Common myeloid progenitor, CD34-positive (primary cell): ENCODE measurements at regions of chr2 and their contacts with region 1.

Region 1: GRCh38 chr2:237512774-237513466 is 25.9 kb downstream of the MLPH start:
- DNase-seq: peak; percentile 89 to 94 (median 90)
- H3K4me3 ChIP-seq: no peak overlapping the region
- H3K27ac ChIP-seq: no peak overlapping the region
- H3K4me1 ChIP-seq: no peaks in the 10 kb centered on the region
- H3K27me3 ChIP-seq: peaks cover 0 to 2% (median 0%) of the 10 kb centered on the region in 5 experiments

Region 2: GRCh38 chr2:237500681-237501424 is 12.1 kb before region 1 on chr2:
- CTCF ChIA-PET with region 1: interaction called, 22 read pairs
- POLR2A ChIA-PET with region 1: interaction called, 3 read pairs
- DNase-seq: peak; percentile 24 to 74 (median 58)
- H3K4me3 ChIP-seq: no peak overlapping the region
- H3K27ac ChIP-seq: no peak overlapping the region
- H3K4me1 ChIP-seq: peaks cover 0 to 4% (median 2%) of the 10 kb centered on the region in 4 experiments
- H3K27me3 ChIP-seq: peaks cover 0 to 23% (median 10%) of the 10 kb centered on the region in 5 experiments

Region 3: DNA sequence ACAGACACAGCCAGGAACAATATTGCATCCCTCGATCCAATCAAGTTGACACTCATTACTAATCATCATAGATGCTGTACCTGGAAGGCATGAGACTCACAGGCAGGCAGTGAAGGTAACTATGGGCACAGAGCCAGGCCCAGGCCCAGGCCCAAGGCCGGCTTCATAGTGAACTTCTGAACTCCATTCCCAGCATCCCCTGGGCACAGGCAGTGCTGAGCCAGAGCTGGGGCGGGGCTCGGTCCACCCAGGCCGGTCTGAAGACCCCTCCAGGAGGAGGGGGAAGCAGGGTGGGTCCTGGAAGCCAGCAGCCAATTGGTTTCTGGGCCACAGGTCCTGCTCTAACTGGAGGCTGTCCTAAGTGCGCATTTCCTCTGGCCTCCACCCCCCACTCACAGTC is 11.7 kb after region 1 on chr2:
- CTCF ChIA-PET with region 1: interaction called, 11 read pairs
- POLR2A ChIA-PET with region 1: no interaction called
- DNase-seq: no peak
- H3K4me3 ChIP-seq: no peak overlapping the region
- H3K27ac ChIP-seq: no peak overlapping the region
- H3K4me1 ChIP-seq: no peaks in the 10 kb centered on the region
- H3K27me3 ChIP-seq: no peaks in the 10 kb centered on the region

Region 4: GRCh38 chr2:237744613-237745249 is 231.8 kb after region 1 on chr2:
- CTCF ChIA-PET with region 1: interaction called, 22 read pairs
- POLR2A ChIA-PET with region 1: interaction called, 5 read pairs
- DNase-seq: peak; percentile 60 to 72 (median 68)
- H3K4me3 ChIP-seq: no peak overlapping the region
- H3K27ac ChIP-seq: no peak overlapping the region
- H3K4me1 ChIP-seq: peaks cover 0 to 28% (median 9%) of the 10 kb centered on the region in 4 experiments
- H3K27me3 ChIP-seq: no peaks in the 10 kb centered on the region

Region 5: DNA sequence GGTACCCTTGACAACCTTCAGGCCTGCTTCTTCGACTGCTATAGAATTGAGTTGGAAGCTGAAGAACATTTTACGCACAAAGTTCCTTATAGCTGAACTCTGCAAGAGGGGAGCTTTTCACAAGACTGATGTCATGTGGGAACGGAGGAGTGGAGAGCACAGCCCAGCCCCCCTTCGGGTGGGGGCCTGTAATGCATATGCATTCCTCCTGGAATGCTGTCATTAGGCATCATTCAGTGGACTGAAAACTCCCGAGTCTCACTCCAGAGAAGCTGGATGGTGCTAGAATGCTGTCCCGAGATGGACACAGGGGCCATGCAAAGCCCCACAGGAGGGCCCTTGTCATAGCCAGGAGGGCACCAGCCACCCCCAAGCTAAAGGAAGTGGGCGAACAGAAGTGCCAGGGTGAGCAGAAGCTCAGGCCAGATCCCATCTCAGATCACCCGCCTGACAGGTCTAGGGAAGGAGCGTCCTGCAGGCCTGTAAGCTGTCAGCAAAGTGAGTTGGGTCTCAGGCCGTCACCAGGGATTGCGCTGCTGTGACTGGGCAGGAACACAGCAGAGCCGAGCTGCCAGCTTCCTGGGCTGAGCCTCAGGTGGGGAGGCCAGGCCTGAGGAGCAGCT is 241.8 kb after region 1 on chr2:
- CTCF ChIA-PET with region 1: no interaction called
- POLR2A ChIA-PET with region 1: no interaction called
- DNase-seq: no peak
- H3K4me3 ChIP-seq: no peak overlapping the region
- H3K27ac ChIP-seq: no peak overlapping the region
- H3K4me1 ChIP-seq: peaks cover 0 to 2% (median 0%) of the 10 kb centered on the region in 4 experiments
- H3K27me3 ChIP-seq: no peaks in the 10 kb centered on the region

Region 6: GRCh38 chr2:237774802-237775553 is 262.1 kb after region 1 on chr2:
- CTCF ChIA-PET with region 1: interaction called, 11 read pairs
- POLR2A ChIA-PET with region 1: no interaction called
- DNase-seq: peak; percentile 53 to 72 (median 64)
- H3K4me3 ChIP-seq: no peak overlapping the region
- H3K27ac ChIP-seq: no peak overlapping the region
- H3K4me1 ChIP-seq: no peaks in the 10 kb centered on the region
- H3K27me3 ChIP-seq: no peaks in the 10 kb centered on the region

Region 7: DNA sequence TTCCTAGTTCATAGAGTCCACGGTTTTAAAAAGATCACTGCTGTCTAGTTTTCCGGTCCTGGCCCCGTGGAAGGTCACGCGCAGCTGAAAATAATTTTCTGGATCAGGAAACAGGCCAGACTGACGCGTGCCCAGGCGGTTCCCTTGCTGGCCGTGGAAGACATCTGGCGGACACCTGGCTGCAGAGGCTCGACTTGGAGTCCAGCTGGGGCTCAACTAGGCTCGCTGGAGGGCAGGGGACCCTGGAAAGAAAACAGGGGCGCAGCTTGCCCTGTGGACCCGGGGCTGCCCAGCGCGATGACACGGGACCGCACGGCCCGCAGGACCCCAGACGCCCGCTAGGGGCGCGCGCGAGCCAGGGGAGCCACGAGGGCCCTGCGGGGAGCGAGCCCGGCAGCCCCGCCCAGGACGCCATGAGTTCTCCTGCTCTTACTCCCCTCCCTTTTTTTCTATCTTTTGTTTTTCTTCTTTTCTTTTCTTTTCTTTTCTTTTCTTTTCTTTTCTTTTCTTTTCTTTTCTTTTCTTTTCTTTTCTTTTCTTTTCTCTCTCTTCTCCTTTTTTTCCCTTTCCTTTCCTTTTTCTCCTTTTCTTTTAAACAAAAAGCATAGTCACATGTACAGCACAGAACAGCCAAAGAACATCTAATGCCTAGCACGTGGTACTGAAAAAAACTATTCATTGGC is 410.7 kb after region 1 on chr2:
- CTCF ChIA-PET with region 1: no interaction called
- POLR2A ChIA-PET with region 1: no interaction called
- DNase-seq: peak; percentile 61 to 78 (median 76)
- H3K4me3 ChIP-seq: peak overlapping the region in 6 of 7 experiments; percentile 35 to 79 (median 56)
- H3K27ac ChIP-seq: no peak overlapping the region
- H3K4me1 ChIP-seq: peaks cover 4 to 37% (median 30%) of the 10 kb centered on the region in 4 experiments
- H3K27me3 ChIP-seq: no peaks in the 10 kb centered on the region